ENCODE measurements at regions of chr2 and their contacts with region 1.

Region 1: GRCh38 chr2:230068016-230068650 is 591 bp downstream of the SLC16A14 start:
- DNase-seq: peak in 1 of 2 experiments; percentile 88
- H3K4me3 ChIP-seq: peak overlapping the region; percentile 62 to 71 (median 68)
- H3K27ac ChIP-seq: no peak overlapping the region
- H3K4me1 ChIP-seq: peaks cover 0 to 5% (median 3%) of the 10 kb centered on the region in 4 experiments; a peak in 3 of 7 replicates
- H3K27me3 ChIP-seq: peaks cover 10 to 27% (median 20%) of the 10 kb centered on the region in 4 experiments
- CTCF ChIP-seq: peak; percentile 20 to 32 (median 26)
- EP300 ChIP-seq: no peak
- POLR2A ChIP-seq: no peak; a peak in 1 of 3 replicates
- RAD21 ChIP-seq: peak in 1 of 2 experiments; percentile 6; a peak in 1 of 4 replicates

Region 2: GRCh38 chr2:229896857-229897256 is 171.3 kb before region 1 on chr2:
- CTCF ChIA-PET with region 1: no interaction called
- POLR2A ChIA-PET with region 1: no interaction called
- DNase-seq: no peak
- H3K4me3 ChIP-seq: no peak overlapping the region
- H3K27ac ChIP-seq: no peak overlapping the region
- H3K4me1 ChIP-seq: peaks cover 0 to 3% (median 0%) of the 10 kb centered on the region in 4 experiments; a peak in 3 of 7 replicates
- H3K27me3 ChIP-seq: no peaks in the 10 kb centered on the region
- CTCF ChIP-seq: no peak
- EP300 ChIP-seq: no peak
- POLR2A ChIP-seq: no peak
- RAD21 ChIP-seq: no peak

Region 3: DNA sequence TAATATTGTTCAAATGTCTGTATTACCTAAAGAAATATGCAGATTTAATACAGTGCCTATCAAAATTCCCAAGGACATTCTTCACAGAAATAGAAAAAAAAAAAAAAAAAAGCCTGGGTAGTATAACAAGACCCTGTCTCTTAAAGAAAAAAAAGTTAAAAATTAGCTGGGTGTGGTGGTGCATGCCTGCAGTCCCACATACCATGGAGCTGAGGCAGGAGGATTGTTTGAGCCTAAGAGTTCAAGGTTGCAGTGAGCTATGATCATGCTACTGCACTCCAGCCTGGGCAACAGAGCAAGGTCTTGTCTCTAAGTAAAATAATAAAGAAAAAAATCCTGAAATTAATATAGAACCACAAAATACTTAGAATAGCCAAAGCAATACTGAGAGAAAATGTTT is 51.3 kb before region 1 on chr2:
- CTCF ChIA-PET with region 1: no interaction called
- POLR2A ChIA-PET with region 1: no interaction called
- DNase-seq: no peak
- H3K4me3 ChIP-seq: no peak overlapping the region
- H3K27ac ChIP-seq: no peak overlapping the region
- H3K4me1 ChIP-seq: no peaks in the 10 kb centered on the region
- H3K27me3 ChIP-seq: no peaks in the 10 kb centered on the region
- CTCF ChIP-seq: no peak
- EP300 ChIP-seq: no peak
- POLR2A ChIP-seq: no peak
- RAD21 ChIP-seq: no peak

Region 4: DNA sequence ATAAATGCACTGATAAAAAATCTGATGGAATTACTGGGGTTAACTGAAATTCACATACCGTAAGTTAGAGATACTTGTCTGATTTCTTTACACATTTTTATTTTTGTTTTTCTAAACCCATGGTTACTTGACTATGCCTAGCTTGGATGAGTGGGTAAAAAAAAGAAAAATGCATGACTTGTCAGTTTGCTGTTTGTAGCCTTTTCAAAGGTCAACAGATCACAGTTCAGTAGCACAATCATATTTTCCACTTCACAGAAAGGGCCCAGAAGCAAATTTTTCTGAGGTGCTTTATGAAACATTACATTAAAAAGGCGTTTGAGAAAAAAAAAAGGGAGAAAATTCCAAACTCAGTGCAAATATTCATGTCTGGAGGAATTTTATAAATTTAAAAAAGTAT is 15.8 kb before region 1 on chr2:
- CTCF ChIA-PET with region 1: interaction called, 10 read pairs
- POLR2A ChIA-PET with region 1: no interaction called
- DNase-seq: no peak
- H3K4me3 ChIP-seq: no peak overlapping the region
- H3K27ac ChIP-seq: no peak overlapping the region
- H3K4me1 ChIP-seq: no peaks in the 10 kb centered on the region
- H3K27me3 ChIP-seq: no peaks in the 10 kb centered on the region
- CTCF ChIP-seq: no peak
- EP300 ChIP-seq: no peak
- POLR2A ChIP-seq: no peak
- RAD21 ChIP-seq: no peak

Region 5: DNA sequence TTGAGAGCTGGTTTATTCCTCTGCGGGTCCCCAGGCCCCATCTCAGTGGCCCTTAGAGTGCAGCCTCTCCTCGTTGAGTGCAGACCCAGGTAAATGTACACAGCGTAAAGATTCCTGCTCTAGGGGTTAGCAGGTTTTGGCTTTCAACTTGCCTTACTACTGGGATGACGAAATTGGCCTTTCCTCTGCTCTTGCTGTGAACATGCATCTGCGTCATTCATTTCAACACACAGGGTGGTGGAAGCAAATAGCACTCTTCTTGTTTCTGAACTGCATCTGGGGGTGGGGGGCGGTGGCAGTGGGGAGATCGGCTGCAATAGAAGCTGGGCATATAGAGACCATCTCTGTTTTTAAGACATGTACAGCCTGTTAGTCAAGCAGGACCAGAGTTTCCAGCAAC is 17.1 kb after region 1 on chr2:
- CTCF ChIA-PET with region 1: interaction called, 48 read pairs
- POLR2A ChIA-PET with region 1: interaction called, 3 read pairs
- DNase-seq: no peak
- H3K4me3 ChIP-seq: no peak overlapping the region
- H3K27ac ChIP-seq: no peak overlapping the region
- H3K4me1 ChIP-seq: peaks cover 0 to 5% (median 3%) of the 10 kb centered on the region in 4 experiments; a peak in 6 of 7 replicates
- H3K27me3 ChIP-seq: no peaks in the 10 kb centered on the region
- CTCF ChIP-seq: no peak
- EP300 ChIP-seq: no peak
- POLR2A ChIP-seq: no peak
- RAD21 ChIP-seq: no peak

Region 6: GRCh38 chr2:230160112-230160660 is 92.1 kb after region 1 on chr2:
- CTCF ChIA-PET with region 1: interaction called, 46 read pairs
- POLR2A ChIA-PET with region 1: interaction called, 3 read pairs
- DNase-seq: peak; percentile 31 to 71
- H3K4me3 ChIP-seq: no peak overlapping the region
- H3K27ac ChIP-seq: no peak overlapping the region
- H3K4me1 ChIP-seq: peaks cover 0 to 2% (median 0%) of the 10 kb centered on the region in 4 experiments; a peak in 1 of 7 replicates
- H3K27me3 ChIP-seq: no peaks in the 10 kb centered on the region
- CTCF ChIP-seq: peak; percentile 19 to 77 (median 72)
- EP300 ChIP-seq: no peak
- POLR2A ChIP-seq: no peak
- RAD21 ChIP-seq: peak; percentile 81 to 86